CD4-positive, alpha-beta T cell (primary cell): ENCODE measurements at regions of chr16 and their contacts with region 1.

Region 1: GRCh38 chr16:76345163-76345661 is 68.0 kb downstream of the CNTNAP4 start:
- DNase-seq: no peak
- ATAC-seq: no peak
- H3K4me3 ChIP-seq: no peak overlapping the region
- H3K4me3 Mint-ChIP-seq: no peak overlapping the region
- H3K27ac ChIP-seq: no peak overlapping the region
- H3K27ac Mint-ChIP-seq: no peak overlapping the region
- H3K4me1 ChIP-seq: no peaks in the 10 kb centered on the region
- H3K4me1 Mint-ChIP-seq: no peaks in the 10 kb centered on the region
- H3K27me3 ChIP-seq: no peaks in the 10 kb centered on the region
- H3K27me3 Mint-ChIP-seq: no peaks in the 10 kb centered on the region
- CTCF ChIP-seq: no peak

Region 2: DNA sequence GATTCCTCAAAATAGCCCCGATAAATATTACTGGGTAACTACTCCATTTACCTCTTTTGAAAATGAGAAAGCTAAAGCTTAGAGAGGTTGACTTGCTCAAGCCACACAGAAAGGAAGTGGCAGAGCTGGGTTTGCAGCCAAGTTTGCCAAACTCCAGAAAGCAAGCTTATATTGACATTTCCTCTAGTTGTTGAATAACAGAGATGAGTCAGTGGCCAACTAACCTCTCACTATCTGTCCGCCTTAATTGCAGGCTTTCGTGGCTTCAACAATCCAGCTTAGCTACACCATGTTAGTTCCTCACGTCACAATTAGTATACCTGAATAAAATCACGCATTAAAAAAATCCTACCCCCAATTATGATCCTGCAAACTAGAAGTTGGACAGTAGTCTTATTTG is 83.6 kb after region 1 on chr16:
- CTCF ChIA-PET with region 1: no interaction called
- POLR2A ChIA-PET with region 1: no interaction called
- intact Hi-C with region 1: loop called in 1 of 2 experiments (anchors 10 kb)
- DNase-seq: no peak
- ATAC-seq: no peak
- H3K4me3 ChIP-seq: no peak overlapping the region
- H3K4me3 Mint-ChIP-seq: no peak overlapping the region
- H3K27ac ChIP-seq: no peak overlapping the region
- H3K27ac Mint-ChIP-seq: no peak overlapping the region
- H3K4me1 ChIP-seq: no peaks in the 10 kb centered on the region
- H3K4me1 Mint-ChIP-seq: no peaks in the 10 kb centered on the region
- H3K27me3 ChIP-seq: no peaks in the 10 kb centered on the region
- H3K27me3 Mint-ChIP-seq: no peaks in the 10 kb centered on the region
- CTCF ChIP-seq: no peak